Posterior vena cava (tissue), 2 donors: ENCODE measurements at regions of chr1 and their contacts with region 1.

Region 1: DNA sequence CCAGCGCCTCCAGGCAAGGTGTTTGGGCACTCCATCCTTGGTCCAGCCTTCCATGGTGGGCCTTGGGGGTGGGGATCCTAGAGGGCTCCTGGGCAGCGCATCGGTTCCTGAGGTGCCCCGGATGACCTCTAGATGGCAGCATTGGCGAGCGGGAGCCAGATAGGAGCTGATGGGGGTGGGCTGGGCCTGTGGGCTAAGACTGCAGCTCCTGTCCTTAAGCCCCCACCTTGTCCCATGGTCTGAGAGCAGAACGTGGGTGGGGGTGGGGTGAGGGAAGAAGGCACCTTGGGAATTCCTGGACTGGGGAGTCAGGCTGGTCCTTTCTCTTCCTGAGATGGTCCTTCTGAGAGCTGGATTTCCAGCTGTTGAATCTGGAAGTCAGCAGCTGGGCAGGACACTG is 93.4 kb upstream of the CSF3R start:
- DNase-seq: peak; percentile 83

Region 2: DNA sequence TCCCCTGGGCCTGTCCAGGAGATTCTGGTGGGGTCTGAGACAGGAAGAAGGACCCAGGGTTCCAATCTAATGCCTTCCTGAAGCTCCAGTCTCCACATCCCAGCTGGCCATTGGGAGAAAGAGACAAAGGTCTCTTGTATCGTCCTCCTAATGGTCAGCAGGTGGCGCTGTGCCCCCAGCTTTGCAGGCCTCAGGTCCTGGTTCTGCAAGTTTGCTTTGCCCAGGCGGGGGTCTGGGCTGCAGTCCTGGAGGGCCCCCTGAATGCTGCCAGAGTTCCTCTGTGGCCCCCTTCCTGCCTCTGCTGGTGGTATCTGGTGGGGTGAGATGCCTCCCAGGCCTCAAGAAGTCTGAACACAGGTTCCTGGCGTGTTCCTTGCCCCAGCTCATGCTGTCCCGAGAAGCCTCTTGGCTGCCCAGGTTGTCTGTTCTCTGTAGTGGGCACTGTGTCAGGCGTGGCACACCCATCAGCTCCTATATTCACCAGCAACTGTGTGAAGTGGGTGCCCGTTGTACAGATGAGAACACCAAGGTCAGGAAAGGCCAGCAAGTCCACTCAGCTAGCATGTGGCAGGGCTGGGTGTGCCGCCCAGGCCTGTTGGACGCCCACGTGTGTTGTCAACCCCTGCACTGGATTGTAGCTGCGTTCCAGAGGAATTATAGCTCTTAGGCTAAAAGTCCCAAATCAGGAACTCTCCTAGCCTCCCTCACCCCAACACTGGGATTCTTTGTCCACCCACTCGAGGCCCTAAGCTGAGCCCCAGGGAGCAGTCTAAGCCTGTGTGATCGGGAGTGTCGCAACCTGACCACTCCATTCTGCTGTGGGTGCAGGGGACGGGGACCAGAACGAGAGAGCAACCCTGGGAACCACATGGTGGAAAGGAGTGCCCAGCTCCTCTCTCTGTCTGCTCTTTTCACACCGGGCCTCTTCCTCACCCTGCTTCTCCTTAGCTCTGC is 59.5 kb before region 1 on chr1:
- intact Hi-C with region 1: no loop called
- DNase-seq: peak; percentile 87

Region 3: DNA sequence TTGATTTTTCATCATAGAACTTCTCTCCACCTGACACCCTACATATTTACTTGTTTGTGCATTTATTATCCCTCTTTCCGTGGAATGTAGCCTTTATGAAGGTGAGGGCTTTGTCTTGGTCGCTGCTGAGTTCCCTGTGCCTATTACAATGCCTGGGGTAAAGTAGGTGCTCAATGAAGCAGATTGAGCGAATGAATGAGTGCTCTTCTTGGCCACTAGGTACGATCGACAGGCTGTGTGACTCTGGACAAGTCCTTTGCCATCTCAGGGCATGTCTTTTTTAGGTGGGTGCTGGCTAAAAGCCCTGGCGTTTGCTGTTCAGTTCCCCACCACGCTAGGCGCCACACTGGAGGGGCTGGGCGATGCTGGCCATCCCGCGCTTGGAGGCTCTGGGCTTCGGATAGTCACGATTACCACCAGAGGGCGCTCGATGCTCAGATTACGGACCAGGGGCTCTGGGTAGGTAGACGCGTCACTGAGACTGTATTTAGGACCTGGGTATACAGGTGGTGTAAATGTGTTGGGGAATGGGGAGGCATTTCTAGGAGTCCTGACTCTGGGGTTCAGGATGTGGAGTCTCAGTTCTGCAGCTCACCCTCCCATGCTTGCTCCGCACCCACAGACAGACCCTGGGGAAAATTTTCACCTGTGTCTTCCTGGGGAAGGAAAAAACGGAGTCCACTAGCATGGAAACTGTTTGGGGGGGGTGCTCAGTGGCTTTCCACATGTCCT is 22.4 kb before region 1 on chr1:
- intact Hi-C with region 1: no loop called
- DNase-seq: peak; percentile 85

Region 4: DNA sequence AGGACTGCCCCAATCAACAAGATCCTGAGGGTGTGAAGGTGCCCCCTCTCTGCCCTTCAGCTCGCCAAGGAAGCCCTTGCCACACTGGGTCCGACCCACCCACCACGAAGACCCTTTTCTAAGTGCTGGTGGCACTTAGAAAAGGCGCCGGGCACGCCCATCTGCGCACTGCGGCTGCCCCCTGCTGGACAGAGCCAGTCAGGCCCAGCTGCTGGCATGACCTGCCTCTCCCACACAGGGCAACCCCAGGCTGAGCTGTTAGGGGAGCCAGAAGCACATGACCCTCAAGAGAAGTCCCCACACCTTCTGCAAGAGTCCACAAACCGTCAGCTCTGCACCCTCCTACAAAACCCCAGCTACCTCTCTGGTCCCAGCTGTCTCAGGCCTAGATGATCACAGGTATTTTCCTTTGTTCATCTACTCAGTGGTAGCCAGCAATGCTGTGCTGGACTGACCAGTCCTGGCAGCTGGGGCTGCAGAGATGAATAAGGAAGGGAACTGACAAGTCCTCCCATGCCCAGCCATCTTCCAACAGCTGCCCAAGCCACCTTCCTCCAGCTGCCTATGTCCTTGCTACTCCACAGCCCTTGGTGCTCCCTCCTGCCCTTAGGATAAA is 858.3 kb after region 1 on chr1:
- intact Hi-C with region 1: loop called (anchors 10 kb)
- DNase-seq: peak; percentile 91